ENCODE measurements at regions of chr17 and their contacts with region 1.

Region 1: DNA sequence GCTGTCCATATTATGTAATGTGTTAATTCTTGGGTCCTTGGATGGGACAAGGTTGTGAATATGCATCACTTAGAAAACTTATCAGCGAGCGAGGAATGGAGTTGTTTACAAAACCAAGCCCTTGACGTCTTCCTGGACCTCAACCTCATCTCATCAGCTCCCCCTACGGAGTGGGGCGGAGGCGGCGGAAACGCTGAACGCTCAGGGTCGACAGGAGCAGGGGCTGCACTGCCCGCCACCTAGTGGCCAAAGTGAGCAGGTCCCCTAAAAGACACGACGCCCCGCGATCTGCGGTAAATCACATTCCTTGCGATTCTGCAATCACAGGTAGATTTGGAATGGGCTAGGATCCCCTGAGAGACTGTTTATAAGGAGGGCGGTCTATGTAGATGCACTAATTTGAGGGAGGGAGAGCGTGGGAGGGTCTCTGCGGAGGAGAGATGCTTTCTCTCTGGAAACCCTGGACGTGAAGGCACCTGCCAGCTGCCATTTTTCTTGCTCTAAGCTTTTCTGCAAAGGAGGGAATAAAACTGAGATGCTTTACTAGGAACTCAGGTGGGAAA is 5.4 kb upstream of the ICAM2 start:
- DNase-seq: peak; percentile 95
- H3K4me3 Mint-ChIP-seq: peak overlapping the region; percentile 75
- H3K27ac Mint-ChIP-seq: peak overlapping the region; percentile 75
- H3K4me1 Mint-ChIP-seq: peaks cover 61% of the 10 kb centered on the region
- H3K27me3 Mint-ChIP-seq: no peaks in the 10 kb centered on the region

Region 2: GRCh38 chr17:63911657-63912426 is 114.0 kb before region 1 on chr17:
- CTCF ChIA-PET with region 1: interaction called, 91 read pairs
- intact Hi-C with region 1: no loop called
- DNase-seq: peak; percentile 74
- H3K4me3 Mint-ChIP-seq: no peak overlapping the region
- H3K27ac Mint-ChIP-seq: no peak overlapping the region
- H3K4me1 Mint-ChIP-seq: no peaks in the 10 kb centered on the region
- H3K27me3 Mint-ChIP-seq: no peaks in the 10 kb centered on the region

Region 3: DNA sequence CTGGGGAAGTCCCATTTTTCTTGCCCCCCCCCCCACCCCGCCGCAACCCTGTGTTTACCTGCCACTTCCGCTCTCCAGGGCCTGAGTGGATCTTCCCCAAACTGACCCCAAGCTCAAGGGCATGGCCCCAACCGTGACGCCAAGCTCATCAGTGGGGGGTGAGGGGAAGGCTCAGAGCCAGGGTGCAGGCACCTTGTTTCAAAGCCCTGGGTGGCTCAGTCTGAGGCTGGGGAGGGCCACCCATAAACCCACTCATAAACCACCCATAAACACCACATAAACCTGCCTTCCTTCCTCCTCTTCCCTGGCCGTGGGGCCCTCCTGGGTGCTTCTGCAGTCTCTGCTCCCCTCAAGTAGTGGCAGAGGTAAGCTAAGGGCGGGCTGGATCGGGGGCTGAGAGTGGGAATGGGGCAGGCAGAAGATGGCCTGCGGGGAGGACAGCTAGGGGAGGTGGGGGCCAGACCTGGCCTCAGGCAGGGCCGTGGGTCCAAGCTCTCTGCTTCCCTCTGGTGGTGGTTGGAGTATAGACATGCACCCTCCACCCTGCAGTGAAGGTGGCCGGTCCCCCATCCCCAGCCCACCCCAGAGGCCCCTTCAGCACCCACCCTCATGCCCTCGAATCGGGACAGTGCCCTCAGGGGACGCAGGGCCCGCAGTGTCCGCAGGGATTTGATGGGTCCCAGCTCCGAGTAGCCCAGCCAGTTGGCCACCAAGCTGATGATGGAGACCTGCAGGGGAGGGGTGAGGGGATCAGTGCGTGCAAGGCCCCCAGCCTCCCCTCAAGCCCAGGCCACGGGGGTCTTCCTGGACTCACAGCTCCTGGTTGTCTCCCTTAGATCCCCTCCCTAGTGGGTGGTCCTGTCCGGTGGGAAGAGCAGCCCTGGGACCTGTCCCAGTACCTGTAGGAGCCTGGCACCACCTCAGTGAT is 79.1 kb before region 1 on chr17:
- CTCF ChIA-PET with region 1: interaction called, 17 read pairs
- intact Hi-C with region 1: loop called (anchors 1 kb)
- DNase-seq: peak; percentile 74
- H3K4me3 Mint-ChIP-seq: peak overlapping the region; percentile 28
- H3K27ac Mint-ChIP-seq: no peak overlapping the region
- H3K4me1 Mint-ChIP-seq: peaks cover 8% of the 10 kb centered on the region
- H3K27me3 Mint-ChIP-seq: no peaks in the 10 kb centered on the region

Region 4: GRCh38 chr17:64041912-64042311 is 16.1 kb after region 1 on chr17:
- CTCF ChIA-PET with region 1: interaction called, 22 read pairs
- intact Hi-C with region 1: no loop called
- DNase-seq: no peak
- H3K4me3 Mint-ChIP-seq: no peak overlapping the region
- H3K27ac Mint-ChIP-seq: peak overlapping the region; percentile 32
- H3K4me1 Mint-ChIP-seq: peaks cover 7% of the 10 kb centered on the region
- H3K27me3 Mint-ChIP-seq: no peaks in the 10 kb centered on the region

Region 5: DNA sequence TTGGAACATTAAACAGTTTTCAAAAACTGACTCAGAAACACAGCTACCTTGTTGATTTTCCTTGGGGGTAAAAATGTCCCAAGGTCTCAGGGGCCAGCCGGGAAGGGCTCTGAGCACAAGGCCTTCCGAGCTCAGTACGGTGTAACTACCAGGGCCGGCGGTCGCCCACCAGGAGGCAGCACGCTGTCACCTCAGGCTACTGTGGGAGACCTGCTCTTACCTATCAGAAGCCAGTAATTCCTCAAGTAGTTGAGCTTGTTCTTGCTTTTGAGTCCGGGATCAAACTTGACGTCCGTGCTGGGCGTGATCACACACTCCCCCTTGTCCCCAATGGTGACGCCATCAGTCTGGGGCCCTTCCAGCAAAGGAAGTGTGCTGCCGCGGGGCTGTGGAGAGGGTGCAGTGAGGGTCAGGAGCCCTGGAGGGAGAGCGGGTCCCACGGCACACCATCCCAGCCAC is 38.0 kb after region 1 on chr17:
- CTCF ChIA-PET with region 1: interaction called, 33 read pairs
- intact Hi-C with region 1: loop called (anchors 2 kb)
- DNase-seq: peak; percentile 82
- H3K4me3 Mint-ChIP-seq: peak overlapping the region; percentile 16
- H3K27ac Mint-ChIP-seq: peak overlapping the region; percentile 66
- H3K4me1 Mint-ChIP-seq: peaks cover 67% of the 10 kb centered on the region
- H3K27me3 Mint-ChIP-seq: no peaks in the 10 kb centered on the region

Region 6: GRCh38 chr17:64129764-64130558 is 104.1 kb after region 1 on chr17 and contains the start of gene ERN1:
- CTCF ChIA-PET with region 1: interaction called, 372 read pairs
- intact Hi-C with region 1: loop called (anchors 1 kb)
- DNase-seq: peak; percentile 92
- H3K4me3 Mint-ChIP-seq: peak within 1 kb of the TSS; percentile 90
- H3K27ac Mint-ChIP-seq: peak within 1 kb of the TSS; percentile 92
- H3K4me1 Mint-ChIP-seq: peaks cover 52% of the 10 kb centered on the region
- H3K27me3 Mint-ChIP-seq: no peaks in the 10 kb centered on the region
- total RNA-seq, gene ERN1: 21.9 to 22.0 TPM

Region 7: DNA sequence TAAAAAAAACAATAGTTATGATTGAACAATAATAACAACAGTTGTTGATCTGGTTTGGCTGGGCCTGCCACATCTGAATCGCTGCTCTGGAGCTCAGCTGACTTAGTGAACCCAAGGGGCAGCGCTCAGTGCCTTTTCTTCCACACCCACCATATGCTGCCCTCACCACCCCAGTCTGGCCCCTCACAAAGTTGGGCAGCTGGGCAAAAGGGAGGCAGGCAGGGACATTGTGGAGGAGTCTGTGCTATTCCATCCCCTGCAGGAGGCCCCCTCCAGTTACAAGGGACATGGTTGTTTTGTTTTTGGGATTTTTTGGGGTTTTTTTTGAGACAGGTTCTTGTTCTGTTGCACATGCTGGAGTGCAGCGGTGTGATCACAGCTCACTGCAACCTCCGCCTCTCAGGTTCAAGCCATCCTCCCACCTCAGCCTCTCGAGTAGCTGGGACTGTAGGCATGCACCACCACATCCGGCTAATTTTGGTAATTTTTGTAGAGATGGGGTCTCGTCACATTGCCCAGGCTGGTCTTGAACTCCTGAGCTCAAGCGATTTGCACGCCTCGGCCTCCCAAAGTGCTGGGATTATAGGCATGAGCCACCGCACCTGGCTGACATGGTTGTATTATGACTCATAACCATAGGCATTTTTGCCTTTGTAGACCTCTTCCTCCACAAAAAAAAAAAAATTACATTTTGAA is 373.4 kb after region 1 on chr17:
- CTCF ChIA-PET with region 1: no interaction called
- intact Hi-C with region 1: loop called (anchors 10 kb)
- DNase-seq: no peak
- H3K4me3 Mint-ChIP-seq: no peak overlapping the region
- H3K27ac Mint-ChIP-seq: no peak overlapping the region
- H3K4me1 Mint-ChIP-seq: peaks cover 37% of the 10 kb centered on the region
- H3K27me3 Mint-ChIP-seq: no peaks in the 10 kb centered on the region

Region 8: DNA sequence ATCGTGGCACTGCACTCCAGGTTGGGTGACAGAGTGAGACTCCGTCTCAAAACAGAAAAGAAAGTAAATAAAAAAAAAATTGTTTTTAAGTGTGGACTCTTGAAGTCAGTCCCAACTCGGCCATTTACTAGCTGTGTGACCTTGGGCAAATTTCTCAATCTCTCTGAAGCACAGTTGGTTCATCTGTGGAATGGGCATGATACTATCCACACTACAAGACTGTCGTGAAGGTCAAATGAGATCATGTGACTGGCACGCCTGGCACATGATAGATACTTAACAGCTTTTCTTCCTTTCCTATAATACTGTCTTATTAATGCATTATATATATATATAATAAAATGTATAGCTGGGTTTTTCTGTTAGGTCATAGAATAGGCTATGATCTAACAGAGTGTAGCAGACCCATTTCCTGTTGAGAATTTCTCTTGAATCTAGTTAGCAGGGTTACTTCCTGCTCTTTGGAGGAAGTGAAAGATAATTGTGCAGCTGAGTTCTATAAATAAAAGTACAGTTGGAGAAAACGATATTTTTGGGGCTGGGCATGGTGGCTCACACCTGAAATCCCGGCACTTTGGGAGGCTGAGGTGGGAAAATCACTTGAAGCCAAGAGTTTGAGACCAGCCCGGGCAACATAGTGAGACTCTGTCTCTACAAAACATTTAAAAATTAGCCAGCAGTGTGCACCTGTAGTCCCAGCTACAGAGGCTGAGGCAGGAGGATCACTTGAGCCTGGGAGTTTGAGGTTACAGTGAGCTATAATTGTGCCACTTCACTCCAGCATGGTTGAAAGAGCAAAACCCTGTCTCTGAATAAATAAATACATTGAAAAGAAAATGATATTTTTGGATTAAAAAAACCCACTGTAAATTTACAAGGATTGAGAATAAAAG is 430.4 kb after region 1 on chr17:
- CTCF ChIA-PET with region 1: no interaction called
- intact Hi-C with region 1: no loop called
- DNase-seq: no peak
- H3K4me3 Mint-ChIP-seq: no peak overlapping the region
- H3K27ac Mint-ChIP-seq: no peak overlapping the region
- H3K4me1 Mint-ChIP-seq: peaks cover 14% of the 10 kb centered on the region
- H3K27me3 Mint-ChIP-seq: no peaks in the 10 kb centered on the region